H1 (cell line): ENCODE measurements at regions of chr1 and their contacts with region 1.

Region 1: DNA sequence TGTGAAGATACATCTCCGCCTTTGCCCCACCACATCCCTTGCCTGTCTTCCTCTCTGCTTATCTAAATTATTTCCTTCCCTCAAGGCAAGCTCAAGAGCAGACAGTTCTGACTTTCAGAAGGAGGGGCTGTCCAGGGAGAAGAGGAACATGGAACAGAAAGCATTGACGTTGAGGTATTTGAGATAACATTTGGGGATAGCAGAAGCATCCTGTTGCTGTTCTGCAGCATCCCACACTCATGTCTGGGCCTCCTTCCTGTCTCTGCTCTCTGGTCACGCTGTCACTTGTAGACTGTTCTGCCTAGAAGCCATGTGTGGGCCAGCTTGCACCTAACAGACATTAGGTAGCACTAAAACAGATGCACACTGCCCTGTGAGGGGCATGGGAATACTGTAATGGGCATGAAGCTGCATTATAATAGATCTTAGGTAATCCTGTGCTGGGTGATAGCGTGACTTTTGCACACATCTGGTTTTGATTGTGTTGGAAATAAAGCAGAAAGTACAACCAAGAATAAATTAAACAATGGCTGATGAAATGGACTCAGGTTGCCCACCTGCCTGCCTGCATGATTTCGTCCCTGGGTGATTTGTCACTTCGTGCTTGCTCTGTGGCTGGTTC is 660 bp upstream of the RD3 start:
- DNase-seq: no peak
- H3K4me3 ChIP-seq: no peak overlapping the region
- H3K27ac ChIP-seq: no peak overlapping the region
- H3K4me1 ChIP-seq: no peaks in the 10 kb centered on the region; a peak in 1 of 7 replicates
- H3K27me3 ChIP-seq: no peaks in the 10 kb centered on the region; a peak in 1 of 7 replicates
- CTCF ChIP-seq: no peak
- EP300 ChIP-seq: no peak
- POLR2A ChIP-seq: no peak
- RAD21 ChIP-seq: no peak

Region 2: DNA sequence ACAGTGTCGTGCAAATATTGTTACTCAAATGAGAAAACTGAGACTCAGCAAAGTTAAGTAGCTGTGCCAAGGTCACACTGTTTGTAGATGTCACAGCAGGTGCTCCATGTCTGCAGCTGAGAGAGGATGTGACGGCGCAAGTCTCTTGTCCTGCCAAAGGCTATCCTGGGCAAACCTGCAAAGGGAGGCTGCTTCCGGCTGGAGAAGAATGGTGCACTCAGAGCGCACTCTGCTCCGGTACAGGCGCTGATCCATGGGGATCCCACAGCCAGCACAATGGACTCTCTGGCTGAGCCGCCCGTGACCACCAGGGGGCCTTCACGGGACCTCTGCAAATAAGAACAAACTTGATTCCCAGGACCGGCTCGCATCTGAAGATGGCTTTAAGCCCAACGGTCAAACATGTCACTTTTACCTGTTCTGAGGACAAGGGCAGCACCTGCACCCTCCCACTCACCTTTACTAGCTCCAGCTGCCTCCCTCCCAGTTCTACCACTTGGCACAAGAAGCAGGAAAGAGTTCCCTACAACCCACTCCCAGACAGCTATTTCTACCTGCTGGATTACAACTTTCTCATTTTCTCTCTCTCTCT is 22.6 kb before region 1 on chr1:
- CTCF ChIA-PET with region 1: interaction called, 15 read pairs
- POLR2A ChIA-PET with region 1: no interaction called
- DNase-seq: peak; percentile 81 to 92
- H3K4me3 ChIP-seq: no peak overlapping the region
- H3K27ac ChIP-seq: no peak overlapping the region
- H3K4me1 ChIP-seq: peaks cover 0 to 5% (median 2%) of the 10 kb centered on the region in 4 experiments; a peak in 4 of 7 replicates
- H3K27me3 ChIP-seq: no peaks in the 10 kb centered on the region
- CTCF ChIP-seq: peak; percentile 79 to 87 (median 81)
- EP300 ChIP-seq: no peak; a peak in 1 of 3 replicates
- POLR2A ChIP-seq: no peak
- RAD21 ChIP-seq: peak; percentile 49 to 71

Region 3: GRCh38 chr1:211476200-211476849 is 16.3 kb before region 1 on chr1:
- CTCF ChIA-PET with region 1: interaction called, 29 read pairs
- POLR2A ChIA-PET with region 1: interaction called, 5 read pairs
- DNase-seq: peak in 1 of 2 experiments; percentile 70
- H3K4me3 ChIP-seq: no peak overlapping the region
- H3K27ac ChIP-seq: no peak overlapping the region
- H3K4me1 ChIP-seq: no peaks in the 10 kb centered on the region; a peak in 1 of 7 replicates
- H3K27me3 ChIP-seq: no peaks in the 10 kb centered on the region
- CTCF ChIP-seq: peak; percentile 75 to 82 (median 75)
- EP300 ChIP-seq: no peak
- POLR2A ChIP-seq: no peak
- RAD21 ChIP-seq: peak; percentile 60 to 66